ENCODE measurements at regions of chr2 and their contacts with region 1.

Region 1: DNA sequence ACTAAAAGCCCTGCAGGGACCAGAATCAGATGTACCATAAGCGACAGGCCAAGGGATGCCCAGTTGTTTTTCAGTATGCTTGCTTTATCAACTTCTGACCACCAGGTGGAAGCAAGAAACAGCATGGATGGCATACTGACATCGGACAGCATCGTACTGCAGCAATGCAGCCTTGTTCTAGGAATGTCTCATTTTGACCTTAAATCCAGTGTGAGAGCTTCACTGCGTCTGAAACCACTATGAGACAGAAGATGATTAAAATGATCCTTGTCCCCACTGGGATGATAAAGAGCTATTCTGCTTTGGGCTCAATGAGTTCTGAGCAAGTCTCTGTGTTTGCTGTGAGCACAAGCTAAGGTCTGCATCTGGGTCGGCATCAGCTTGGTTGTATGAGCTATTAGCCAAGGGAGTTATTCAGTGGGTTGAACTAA is 54.3 kb downstream of the CDK15 start:
- DNase-seq: peak in 4 of 5 donors; percentile 40 to 50 (median 46)
- H3K4me3 ChIP-seq: no peak overlapping the region
- H3K4me3 Mint-ChIP-seq: peak overlapping the region in 2 of 8 donors; percentile 50 to 62
- H3K27ac ChIP-seq: no peak overlapping the region
- H3K27ac Mint-ChIP-seq: no peak overlapping the region
- H3K4me1 ChIP-seq: peaks cover 12% of the 10 kb centered on the region
- H3K4me1 Mint-ChIP-seq: peaks cover 13 to 19% (median 16%) of the 10 kb centered on the region in 4 donors
- H3K27me3 ChIP-seq: no peaks in the 10 kb centered on the region
- H3K27me3 Mint-ChIP-seq: peaks cover 18 to 28% of the 10 kb centered on the region in 2 donors

Region 2: DNA sequence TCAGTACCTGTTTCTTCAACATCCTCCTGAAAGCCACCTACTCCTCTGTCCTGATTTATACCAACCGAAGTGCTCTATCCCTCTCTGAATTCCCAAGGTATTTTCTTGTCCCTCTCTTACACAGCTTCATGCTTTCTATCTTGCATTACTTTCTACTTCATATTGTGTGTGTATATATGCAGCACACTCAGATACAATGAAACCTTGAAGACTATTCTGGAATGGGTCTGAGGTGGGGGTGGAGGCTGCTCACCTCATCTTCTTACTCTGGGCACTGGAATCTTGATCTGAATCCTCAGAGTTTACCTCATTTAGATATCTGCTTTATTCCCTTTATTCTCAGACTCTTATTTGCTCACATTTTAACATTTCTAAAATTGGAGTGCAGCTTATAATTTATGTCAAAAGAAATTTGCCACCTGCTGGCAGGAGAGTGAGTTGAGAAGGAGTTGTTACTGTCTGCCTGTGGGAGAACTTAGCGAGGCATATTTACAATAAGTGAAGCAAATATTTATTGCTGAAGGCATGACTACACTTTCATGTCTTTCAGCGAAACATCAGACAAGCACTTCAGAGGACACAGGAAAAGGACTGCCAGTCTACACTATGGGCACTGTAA is 195.8 kb after region 1 on chr2:
- CTCF ChIA-PET with region 1: interaction called, 8 read pairs
- POLR2A ChIA-PET with region 1: no interaction called
- intact Hi-C with region 1: loop called (anchors 1 kb)
- DNase-seq: no peak
- H3K4me3 ChIP-seq: no peak overlapping the region
- H3K4me3 Mint-ChIP-seq: no peak overlapping the region
- H3K27ac ChIP-seq: no peak overlapping the region
- H3K27ac Mint-ChIP-seq: no peak overlapping the region
- H3K4me1 ChIP-seq: no peaks in the 10 kb centered on the region
- H3K4me1 Mint-ChIP-seq: no peaks in the 10 kb centered on the region
- H3K27me3 ChIP-seq: no peaks in the 10 kb centered on the region
- H3K27me3 Mint-ChIP-seq: peaks cover 22 to 30% of the 10 kb centered on the region in 2 donors

Region 3: GRCh38 chr2:202172439-202173211 is 312.0 kb after region 1 on chr2:
- CTCF ChIA-PET with region 1: interaction called, 164 read pairs
- POLR2A ChIA-PET with region 1: no interaction called
- intact Hi-C with region 1: no loop called
- DNase-seq: no peak
- H3K4me3 ChIP-seq: no peak overlapping the region
- H3K4me3 Mint-ChIP-seq: peak overlapping the region in 2 of 8 donors; percentile 24 to 30
- H3K27ac ChIP-seq: no peak overlapping the region
- H3K27ac Mint-ChIP-seq: peak overlapping the region in 3 of 7 donors; percentile 38 to 91 (median 65)
- H3K4me1 ChIP-seq: peaks cover 9% of the 10 kb centered on the region
- H3K4me1 Mint-ChIP-seq: peaks cover 4 to 19% (median 11%) of the 10 kb centered on the region in 4 donors
- H3K27me3 ChIP-seq: no peaks in the 10 kb centered on the region
- H3K27me3 Mint-ChIP-seq: no peaks in the 10 kb centered on the region

Region 4: DNA sequence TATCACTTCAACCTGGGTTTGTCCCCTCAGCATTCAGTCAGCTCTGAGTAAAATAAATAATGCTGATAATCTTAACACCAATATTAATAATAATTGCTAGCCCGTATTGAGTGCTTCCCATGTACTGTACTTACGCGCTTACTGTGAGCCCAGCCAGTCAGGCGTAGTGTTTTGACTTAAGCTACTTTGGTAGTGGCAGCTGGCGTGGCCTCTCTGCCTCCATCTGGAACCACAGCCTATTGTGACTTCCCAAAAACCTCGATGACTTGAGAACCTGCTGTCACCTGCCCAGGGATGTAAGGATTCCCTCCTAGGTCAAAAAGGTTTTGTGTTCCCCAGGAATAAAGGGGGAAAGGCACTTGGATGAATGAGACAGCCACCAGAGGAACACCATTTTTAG is 324.5 kb after region 1 on chr2:
- CTCF ChIA-PET with region 1: interaction called, 164 read pairs
- POLR2A ChIA-PET with region 1: no interaction called
- intact Hi-C with region 1: no loop called
- DNase-seq: no peak
- H3K4me3 ChIP-seq: no peak overlapping the region
- H3K4me3 Mint-ChIP-seq: no peak overlapping the region
- H3K27ac ChIP-seq: no peak overlapping the region
- H3K27ac Mint-ChIP-seq: no peak overlapping the region
- H3K4me1 ChIP-seq: no peaks in the 10 kb centered on the region
- H3K4me1 Mint-ChIP-seq: no peaks in the 10 kb centered on the region
- H3K27me3 ChIP-seq: no peaks in the 10 kb centered on the region
- H3K27me3 Mint-ChIP-seq: peaks cover 9 to 13% of the 10 kb centered on the region in 2 donors